Posterior vena cava (tissue), 2 donors: ENCODE measurements at regions of chr1 and their contacts with region 1.

Region 1: DNA sequence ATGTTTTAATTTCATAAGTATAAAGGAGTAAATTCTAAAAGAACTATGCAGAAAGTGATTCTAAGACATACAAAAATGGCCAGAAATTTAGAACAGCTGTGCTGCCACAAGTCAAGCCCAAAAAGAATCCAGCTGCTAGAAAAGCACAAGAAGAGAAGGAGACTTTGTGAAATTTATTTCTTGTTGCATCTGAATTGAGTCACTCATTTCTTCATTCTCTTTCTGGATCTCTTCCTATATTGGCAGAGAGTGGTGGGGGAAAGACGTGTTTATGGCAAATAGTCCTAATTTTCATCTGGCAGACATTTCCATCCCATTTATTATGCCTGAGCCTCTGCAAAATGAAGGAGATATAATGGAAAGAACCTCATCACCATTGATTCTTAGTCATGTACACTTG is 139.6 kb upstream of the CTTNBP2NL start:
- DNase-seq: no peak

Region 2: GRCh38 chr1:112272101-112272772 is 15.8 kb after region 1 on chr1:
- intact Hi-C with region 1: loop called in 1 of 2 experiments (anchors 1 kb)
- DNase-seq: no peak